Activated naive CD4-positive, alpha-beta T cell treated with anti-CD3 and anti-CD28 coated beads, Interleukin-2, amount 10 ng/mL, durations not matched to agents 7 days and 5 days (primary cell): ENCODE measurements at regions of chr5 and their contacts with region 1.

Region 1: GRCh38 chr5:39005566-39006232 is 68.5 kb downstream of the RICTOR start:
- DNase-seq: no peak
- H3K4me3 Mint-ChIP-seq: no peak overlapping the region
- H3K27ac Mint-ChIP-seq: no peak overlapping the region
- H3K4me1 Mint-ChIP-seq: peaks cover 10% of the 10 kb centered on the region
- H3K27me3 Mint-ChIP-seq: no peaks in the 10 kb centered on the region

Region 2: DNA sequence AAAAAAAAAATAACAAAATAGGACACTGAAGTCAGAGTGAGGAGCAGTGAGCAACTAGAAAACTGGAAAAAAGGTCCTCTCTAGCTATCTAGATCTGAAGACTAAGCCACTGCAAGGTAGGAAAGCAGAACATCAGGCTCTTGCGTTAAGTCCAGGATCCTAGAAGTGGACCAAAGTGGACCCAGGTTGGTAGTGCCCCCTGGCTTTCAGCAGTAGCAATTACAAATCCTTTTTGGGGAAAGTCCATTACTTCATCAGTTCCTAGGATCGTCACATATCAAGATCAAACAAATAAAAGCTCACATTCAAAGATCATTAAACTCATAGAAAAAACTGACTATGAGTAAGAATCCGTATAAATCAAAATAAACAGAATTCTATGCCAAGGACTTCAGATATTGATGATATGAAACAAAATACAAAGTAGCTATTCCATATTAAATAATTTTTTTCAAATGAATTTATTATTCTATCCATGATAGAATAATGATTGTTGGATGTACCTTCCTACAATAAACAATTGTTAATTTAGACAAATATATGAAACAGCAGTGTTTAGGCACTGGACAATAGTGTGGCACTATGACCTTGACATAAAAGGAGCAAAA is 75.0 kb after region 1 on chr5:
- CTCF ChIA-PET with region 1: interaction called, 13 read pairs
- DNase-seq: peak; percentile 42
- H3K4me3 Mint-ChIP-seq: no peak overlapping the region
- H3K27ac Mint-ChIP-seq: no peak overlapping the region
- H3K4me1 Mint-ChIP-seq: peaks cover 18% of the 10 kb centered on the region
- H3K27me3 Mint-ChIP-seq: peaks cover 40% of the 10 kb centered on the region

Region 3: GRCh38 chr5:39794513-39795210 is 789.0 kb after region 1 on chr5:
- CTCF ChIA-PET with region 1: no interaction called
- DNase-seq: no peak
- H3K4me3 Mint-ChIP-seq: no peak overlapping the region
- H3K27ac Mint-ChIP-seq: no peak overlapping the region
- H3K4me1 Mint-ChIP-seq: no peaks in the 10 kb centered on the region
- H3K27me3 Mint-ChIP-seq: no peaks in the 10 kb centered on the region